Spleen (tissue), 13 donors: ENCODE measurements at regions of chr16 and their contacts with region 1.

Region 1: GRCh38 chr16:69396187-69397061 is 10.6 kb upstream of the TERF2 start:
- DNase-seq: no peak
- H3K4me3 ChIP-seq: no peak overlapping the region
- H3K27ac ChIP-seq: peak overlapping the region in 7 of 8 donors; percentile 35 to 76 (median 68)
- H3K4me1 ChIP-seq: peaks cover 5 to 36% (median 23%) of the 10 kb centered on the region in 6 donors
- H3K27me3 ChIP-seq: no peaks in the 10 kb centered on the region
- CTCF ChIP-seq: peak in 7 of 11 experiments; percentile 47 to 81 (median 66)
- POLR2A ChIP-seq: no peak

Region 2: GRCh38 chr16:69351309-69352027 is 45.0 kb before region 1 on chr16 and contains the start of gene TMED6:
- intact Hi-C with region 1: no loop called
- DNase-seq: peak; percentile 24
- H3K4me3 ChIP-seq: no peak within 1 kb of the TSS
- H3K27ac ChIP-seq: no peak within 1 kb of the TSS
- H3K4me1 ChIP-seq: peaks cover 0 to 5% (median 0%) of the 10 kb centered on the region in 6 donors
- H3K27me3 ChIP-seq: no peaks in the 10 kb centered on the region
- CTCF ChIP-seq: no peak
- POLR2A ChIP-seq: no peak
- total RNA-seq, gene TMED6: 0.85 to 5.2 (median 1.7) TPM in 5 of 7 donors, not detected in the others

Region 3: DNA sequence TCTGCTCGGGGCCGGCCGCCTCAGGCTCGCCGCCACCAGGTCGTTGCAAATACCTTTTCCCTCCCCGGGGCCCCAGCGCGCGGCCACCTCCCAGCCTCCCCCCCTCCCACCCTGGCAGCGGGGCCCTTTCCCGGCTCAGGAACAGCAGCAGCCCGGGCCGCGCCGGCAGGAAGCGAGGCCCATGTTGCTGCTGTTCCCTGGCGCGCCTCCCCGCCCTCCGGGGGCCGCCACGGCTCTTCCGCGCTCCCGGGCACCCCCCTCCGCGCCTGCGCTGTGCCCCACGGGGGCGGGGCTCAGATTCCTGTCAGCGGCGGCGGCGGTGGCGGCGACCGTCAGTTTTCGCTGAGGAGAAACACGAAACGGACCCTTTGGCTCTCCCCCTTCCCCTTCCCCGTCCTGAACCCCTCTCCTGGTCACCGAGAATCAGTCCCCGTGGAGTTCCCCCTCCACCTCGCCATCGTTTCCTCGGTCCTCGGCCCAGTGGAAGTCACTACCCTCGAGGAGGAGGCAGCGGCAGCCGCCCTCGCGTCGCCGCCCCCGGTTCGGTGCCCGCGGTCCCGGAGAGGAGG is 169.3 kb after region 1 on chr16 and contains the start of gene NFAT5:
- intact Hi-C with region 1: loop called (anchors 10 kb)
- DNase-seq: peak; percentile 97
- H3K4me3 ChIP-seq: peak within 1 kb of the TSS; percentile 59 to 92 (median 84)
- H3K27ac ChIP-seq: peak within 1 kb of the TSS; percentile 93 to 99 (median 98)
- H3K4me1 ChIP-seq: peaks cover 31 to 67% (median 58%) of the 10 kb centered on the region in 6 donors
- H3K27me3 ChIP-seq: no peaks in the 10 kb centered on the region
- CTCF ChIP-seq: peak in 2 of 11 experiments; percentile 20 to 21
- POLR2A ChIP-seq: peak; percentile 41 to 99 (median 90)
- total RNA-seq, gene NFAT5: 50.5 to 96.8 (median 60.9) TPM

Region 4: DNA sequence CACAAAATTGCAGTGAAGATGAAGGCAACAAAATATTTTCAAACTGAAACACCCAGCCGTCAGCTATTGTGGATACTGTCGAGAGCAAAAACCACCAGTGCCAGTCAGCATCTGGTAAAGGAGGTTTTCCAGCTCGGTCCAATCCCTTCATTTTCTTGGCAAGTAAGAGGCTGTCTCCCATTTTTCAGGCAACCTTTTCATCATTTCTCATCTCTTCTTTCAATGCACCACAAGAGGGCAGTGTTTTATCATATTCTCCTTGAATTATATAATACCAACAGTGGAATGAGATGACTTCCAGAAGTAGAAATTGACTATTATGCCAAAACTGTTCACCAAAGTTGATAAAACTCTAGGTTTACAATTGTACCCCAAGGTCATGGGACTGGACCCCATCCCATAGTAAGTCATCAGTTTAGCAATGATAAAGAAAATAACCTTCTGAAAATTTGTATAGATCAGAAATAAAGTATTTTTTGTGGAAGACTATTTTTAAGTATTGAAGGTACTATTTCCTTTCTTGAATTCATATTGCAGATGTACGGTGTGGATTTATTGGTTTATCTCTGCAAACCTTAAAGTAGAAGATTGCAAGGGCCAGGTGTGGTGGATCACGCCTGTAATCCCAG is 313.1 kb after region 1 on chr16:
- intact Hi-C with region 1: loop called (anchors 10 kb)
- DNase-seq: no peak
- H3K4me3 ChIP-seq: no peak overlapping the region
- H3K27ac ChIP-seq: peak overlapping the region in 3 of 8 donors; percentile 21 to 28 (median 22)
- H3K4me1 ChIP-seq: peaks cover 0 to 4% (median 0%) of the 10 kb centered on the region in 6 donors
- H3K27me3 ChIP-seq: no peaks in the 10 kb centered on the region
- CTCF ChIP-seq: peak; percentile 37 to 82 (median 73)
- POLR2A ChIP-seq: no peak

Region 5: GRCh38 chr16:69754469-69755310 is 358.3 kb after region 1 on chr16 and contains the start of gene NOB1:
- intact Hi-C with region 1: loop called (anchors 10 kb)
- DNase-seq: peak; percentile 100
- H3K4me3 ChIP-seq: peak within 1 kb of the TSS; percentile 61 to 100 (median 92)
- H3K27ac ChIP-seq: peak within 1 kb of the TSS; percentile 73 to 89 (median 81)
- H3K4me1 ChIP-seq: peaks cover 18 to 30% (median 28%) of the 10 kb centered on the region in 6 donors
- H3K27me3 ChIP-seq: no peaks in the 10 kb centered on the region
- CTCF ChIP-seq: peak; percentile 99 to 100 (median 100)
- POLR2A ChIP-seq: peak in 2 of 3 donors; percentile 54 to 64
- total RNA-seq, gene NOB1: 39.1 to 44.7 (median 39.7) TPM